IMR-90 (cell line): ENCODE measurements at regions of chr12 and their contacts with region 1.

Region 1: DNA sequence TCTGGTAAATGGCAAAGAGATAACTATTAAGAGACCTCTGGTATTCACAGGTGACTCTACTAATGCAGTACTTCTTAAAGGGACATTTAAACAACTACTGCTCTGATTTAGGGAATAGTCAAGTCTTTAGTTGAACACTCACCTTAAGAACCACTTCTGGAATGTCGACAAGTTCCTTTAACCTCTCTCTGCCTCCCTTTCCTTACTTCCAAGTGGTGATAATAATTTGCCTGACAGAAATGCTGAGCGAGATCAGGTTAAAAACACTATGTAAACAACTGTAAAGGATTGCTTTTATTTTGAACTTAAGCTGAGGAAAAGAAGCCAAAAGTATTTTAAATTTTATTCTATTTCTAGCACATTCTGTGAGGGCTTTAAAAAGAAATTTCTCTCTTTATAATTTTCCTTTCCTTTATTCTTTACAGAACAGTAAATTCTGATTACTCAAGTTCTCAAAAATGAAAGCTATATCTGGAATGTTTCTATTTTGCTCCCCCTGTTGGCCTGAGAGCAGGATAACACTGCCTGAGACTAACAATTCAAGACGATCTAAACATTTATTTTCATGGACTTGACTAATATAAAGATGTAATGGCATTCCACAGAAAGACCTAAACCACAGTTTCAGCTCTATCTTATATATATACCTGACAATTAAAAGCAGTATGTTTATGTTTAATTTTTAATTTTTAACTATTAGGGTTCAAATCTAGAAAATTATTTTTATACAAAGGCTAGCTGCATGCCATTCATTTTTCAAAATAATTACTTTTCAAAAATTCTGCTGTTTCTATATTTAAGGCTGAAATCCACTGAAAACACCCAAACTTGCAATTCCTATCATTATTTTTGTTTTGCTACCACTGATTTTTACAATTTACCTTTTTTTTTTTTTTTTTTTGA is 29.2 kb downstream of the ZCCHC8 start:
- DNase-seq: peak; percentile 84
- ATAC-seq: peak; percentile 94
- H3K4me3 ChIP-seq: no peak overlapping the region
- H3K27ac ChIP-seq: peak overlapping the region; percentile 82; the same call in 1 of the 2 replicates
- H3K4me1 ChIP-seq: peaks cover 4% of the 10 kb centered on the region; the same call in 1 of the 2 replicates
- H3K27me3 ChIP-seq: no peaks in the 10 kb centered on the region
- CTCF ChIP-seq: peak; percentile 87
- POLR2A ChIP-seq: no peak
- RAD21 ChIP-seq: peak; percentile 80

Region 2: GRCh38 chr12:122336015-122336946 is 135.3 kb before region 1 on chr12:
- CTCF ChIA-PET with region 1: interaction called, 4 read pairs
- POLR2A ChIA-PET with region 1: no interaction called
- dilution Hi-C with region 1: no loop called
- in situ Hi-C with region 1: no loop called
- intact Hi-C with region 1: loop called (anchors 5 kb)
- DNase-seq: peak; percentile 34
- ATAC-seq: peak; percentile 59
- H3K4me3 ChIP-seq: no peak overlapping the region
- H3K27ac ChIP-seq: no peak overlapping the region
- H3K4me1 ChIP-seq: no peaks in the 10 kb centered on the region
- H3K27me3 ChIP-seq: no peaks in the 10 kb centered on the region
- CTCF ChIP-seq: peak; percentile 72
- POLR2A ChIP-seq: no peak
- RAD21 ChIP-seq: peak; percentile 66

Region 3: DNA sequence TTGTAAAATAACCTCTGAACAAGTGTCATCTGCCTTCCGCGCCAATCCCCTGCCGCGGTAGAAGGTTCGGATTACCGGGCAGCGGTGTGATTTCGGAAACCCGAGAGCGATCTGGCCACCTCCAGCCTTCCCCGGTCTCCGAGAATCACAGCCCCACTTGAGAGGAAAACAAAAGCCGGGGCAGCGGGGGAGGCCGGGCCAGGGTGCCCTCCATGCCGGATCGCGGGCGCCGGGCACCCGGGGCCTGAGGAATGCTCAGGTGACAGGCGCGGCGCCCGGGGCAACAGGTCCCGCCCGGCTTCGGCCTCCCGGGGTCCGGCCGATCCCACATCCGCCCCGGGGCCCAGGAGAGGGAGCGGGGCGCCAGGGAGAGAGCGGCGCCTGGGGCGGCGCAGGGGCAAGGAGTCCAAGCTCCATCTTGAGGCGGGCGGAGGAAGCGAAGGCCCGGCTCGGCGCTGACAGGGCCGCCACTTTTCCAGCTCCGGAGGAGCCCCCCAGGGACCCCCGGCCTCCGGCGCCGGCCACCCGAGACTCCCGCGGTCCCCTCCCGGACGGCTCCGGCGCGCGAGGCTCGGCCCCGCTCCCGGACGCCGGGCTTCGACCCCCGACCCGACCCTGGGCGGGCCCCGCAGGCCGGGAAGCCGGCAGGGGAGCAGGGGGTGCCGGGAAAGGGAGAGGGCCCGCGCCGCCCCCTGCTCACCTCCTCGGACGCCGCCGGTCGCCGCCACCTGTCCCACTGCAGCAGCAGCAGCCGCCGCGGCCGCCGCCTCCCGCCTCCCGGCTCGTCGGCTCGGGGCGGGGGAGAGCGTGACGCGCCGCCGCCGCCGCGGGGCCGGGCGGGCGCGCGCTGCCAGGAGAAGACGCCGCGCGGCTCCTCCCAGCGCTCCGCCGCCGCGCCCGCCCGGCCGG is 49.5 kb before region 1 on chr12 and contains the start of gene CLIP1:
- CTCF ChIA-PET with region 1: interaction called, 5 read pairs
- POLR2A ChIA-PET with region 1: interaction called, 3 read pairs
- dilution Hi-C with region 1: no loop called
- in situ Hi-C with region 1: no loop called
- intact Hi-C with region 1: loop called (anchors 1 kb)
- DNase-seq: peak; percentile 65
- ATAC-seq: peak; percentile 80
- H3K4me3 ChIP-seq: peak within 1 kb of the TSS; percentile 86
- H3K27ac ChIP-seq: peak within 1 kb of the TSS; percentile 98
- H3K4me1 ChIP-seq: peaks cover 10% of the 10 kb centered on the region
- H3K27me3 ChIP-seq: no peaks in the 10 kb centered on the region
- CTCF ChIP-seq: peak; percentile 53
- POLR2A ChIP-seq: peak; percentile 75
- RAD21 ChIP-seq: peak; percentile 64
- total RNA-seq, gene CLIP1: 54.8 and 58.9 TPM in 2 replicates